Psoas muscle (tissue), 8 donors: ENCODE measurements at regions of chr9 and their contacts with region 1.

Region 1: GRCh38 chr9:33737811-33738606 is 57.4 kb upstream of the PRSS3 start:
- DNase-seq: no peak
- ATAC-seq: peak in 3 of 4 donors; percentile 59 to 69 (median 64)
- H3K4me3 ChIP-seq: no peak overlapping the region
- H3K27ac ChIP-seq: no peak overlapping the region
- H3K4me1 ChIP-seq: no peaks in the 10 kb centered on the region
- H3K27me3 ChIP-seq: no peaks in the 10 kb centered on the region
- CTCF ChIP-seq: peak; percentile 41

Region 2: DNA sequence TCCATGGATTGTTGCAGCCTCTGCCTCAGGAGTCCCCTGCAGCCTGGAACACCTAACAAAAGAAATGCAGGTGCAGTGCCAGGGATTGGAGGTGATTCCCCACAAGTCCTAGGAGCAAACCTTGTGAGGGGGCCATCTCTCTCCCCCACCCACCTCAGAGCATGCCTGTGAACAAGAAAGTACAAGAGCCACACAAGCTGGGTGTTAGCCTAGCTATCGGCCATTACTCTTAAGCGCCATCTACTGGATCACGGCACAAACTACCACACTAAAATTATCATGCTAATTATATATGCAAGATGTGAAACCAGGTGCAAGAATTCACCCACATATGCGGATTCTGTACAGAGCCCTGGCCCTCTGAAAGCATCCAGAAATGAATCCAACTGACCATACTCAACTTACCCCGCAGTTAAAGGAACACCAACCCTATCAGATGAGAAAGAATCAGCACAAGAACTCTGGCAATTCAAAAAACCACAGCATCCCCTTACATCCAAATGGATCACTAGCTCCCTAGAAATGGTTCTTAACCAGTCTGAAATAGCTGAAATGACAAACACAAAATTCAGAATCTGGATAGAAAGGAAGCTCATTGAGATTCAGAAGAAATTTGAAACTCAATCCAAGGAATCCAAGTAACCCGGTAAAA is 40.8 kb after region 1 on chr9:
- intact Hi-C with region 1: loop called in 1 of 2 experiments (anchors 2 kb)
- DNase-seq: no peak
- ATAC-seq: peak; percentile 68 to 90 (median 84)
- H3K4me3 ChIP-seq: no peak overlapping the region
- H3K27ac ChIP-seq: no peak overlapping the region
- H3K4me1 ChIP-seq: no peaks in the 10 kb centered on the region
- H3K27me3 ChIP-seq: no peaks in the 10 kb centered on the region
- CTCF ChIP-seq: peak; percentile 67